ENCODE measurements at regions of chr17 and their contacts with region 1.

Region 1: GRCh38 chr17:49191917-49192741 is 18.2 kb downstream of the GNGT2 start:
- DNase-seq: peak; percentile 84 to 98 (median 92)
- ATAC-seq: peak; percentile 52
- H3K4me3 ChIP-seq: peak overlapping the region; percentile 81
- H3K4me3 Mint-ChIP-seq: peak overlapping the region; percentile 93
- H3K27ac ChIP-seq: peak overlapping the region; percentile 92 to 97
- H3K27ac Mint-ChIP-seq: peak overlapping the region; percentile 98
- H3K4me1 ChIP-seq: peaks cover 25% of the 10 kb centered on the region
- H3K4me1 Mint-ChIP-seq: peaks cover 33% of the 10 kb centered on the region
- H3K27me3 ChIP-seq: no peaks in the 10 kb centered on the region
- H3K27me3 Mint-ChIP-seq: peaks cover 10% of the 10 kb centered on the region
- CTCF ChIP-seq: peak; percentile 56

Region 2: GRCh38 chr17:48892940-48893645 is 299.0 kb before region 1 on chr17:
- CTCF ChIA-PET with region 1: no interaction called
- POLR2A ChIA-PET with region 1: interaction called, 4 read pairs
- intact Hi-C with region 1: loop called in 1 of 2 experiments (anchors 5 kb)
- DNase-seq: peak in 2 of 14 experiments; percentile 43 to 49
- ATAC-seq: no peak
- H3K4me3 ChIP-seq: peak overlapping the region; percentile 74
- H3K4me3 Mint-ChIP-seq: peak overlapping the region; percentile 90
- H3K27ac ChIP-seq: peak overlapping the region; percentile 80 to 86
- H3K27ac Mint-ChIP-seq: peak overlapping the region; percentile 91
- H3K4me1 ChIP-seq: peaks cover 25% of the 10 kb centered on the region
- H3K4me1 Mint-ChIP-seq: peaks cover 22% of the 10 kb centered on the region
- H3K27me3 ChIP-seq: no peaks in the 10 kb centered on the region
- H3K27me3 Mint-ChIP-seq: no peaks in the 10 kb centered on the region
- CTCF ChIP-seq: no peak

Region 3: GRCh38 chr17:49180303-49180702 is 11.8 kb before region 1 on chr17:
- CTCF ChIA-PET with region 1: interaction called, 46 read pairs
- POLR2A ChIA-PET with region 1: interaction called, 26 read pairs
- intact Hi-C with region 1: no loop called
- DNase-seq: peak; percentile 40 to 83 (median 62)
- ATAC-seq: peak; percentile 44
- H3K4me3 ChIP-seq: no peak overlapping the region
- H3K4me3 Mint-ChIP-seq: no peak overlapping the region
- H3K27ac ChIP-seq: no peak overlapping the region
- H3K27ac Mint-ChIP-seq: no peak overlapping the region
- H3K4me1 ChIP-seq: peaks cover 5% of the 10 kb centered on the region
- H3K4me1 Mint-ChIP-seq: peaks cover 5% of the 10 kb centered on the region
- H3K27me3 ChIP-seq: no peaks in the 10 kb centered on the region
- H3K27me3 Mint-ChIP-seq: peaks cover 1% of the 10 kb centered on the region
- CTCF ChIP-seq: peak; percentile 89

Region 4: DNA sequence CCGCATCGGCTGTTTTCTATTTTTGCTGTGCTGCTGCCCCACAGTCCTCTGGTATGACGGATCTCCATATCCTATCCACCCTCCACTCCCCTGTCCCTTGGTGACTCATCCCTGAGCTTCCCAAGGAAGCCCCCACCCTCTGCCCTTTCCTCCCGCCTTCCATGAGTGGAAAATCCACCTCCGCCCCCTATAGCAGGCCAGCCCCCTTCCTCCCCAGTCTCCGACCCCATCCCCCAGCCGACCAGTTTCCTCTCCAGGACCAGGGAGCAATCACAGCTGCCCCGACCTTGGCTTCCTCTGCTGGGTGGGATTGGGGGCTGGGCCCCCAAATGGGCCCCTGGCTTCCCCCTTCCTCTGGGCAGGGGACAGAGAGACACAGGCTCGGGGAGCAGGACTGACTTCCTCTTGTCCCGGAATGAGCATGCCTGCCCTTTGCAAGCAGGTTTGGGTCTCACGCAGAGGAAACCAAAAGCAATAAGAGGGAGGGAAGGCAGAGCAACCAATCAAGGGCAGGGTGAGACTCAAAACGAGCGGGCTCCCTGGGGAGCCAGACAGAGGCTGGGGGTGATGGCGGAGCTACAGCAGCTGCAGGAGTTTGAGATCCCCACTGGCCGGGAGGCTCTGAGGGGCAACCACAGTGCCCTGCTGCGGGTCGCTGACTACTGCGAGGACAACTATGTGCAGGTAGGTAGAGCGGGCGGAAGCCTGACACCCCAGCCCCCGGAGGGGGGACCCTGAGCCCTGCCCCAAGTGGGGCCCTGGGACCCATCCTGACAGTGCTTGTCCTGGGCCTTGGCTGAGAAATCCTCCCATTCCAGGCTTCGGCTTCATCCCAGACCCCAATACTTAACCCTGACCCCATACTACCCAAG is 18.3 kb after region 1 on chr17 and contains the starts of genes ABI3 and GNGT2:
- CTCF ChIA-PET with region 1: interaction called, 14 read pairs
- POLR2A ChIA-PET with region 1: interaction called, 53 read pairs
- intact Hi-C with region 1: loop called in 1 of 2 experiments (anchors 2 kb)
- DNase-seq: peak; percentile 39 to 84 (median 53)
- ATAC-seq: peak; percentile 88
- H3K4me3 ChIP-seq: peak within 1 kb of the TSS; percentile 67
- H3K4me3 Mint-ChIP-seq: peak within 1 kb of the TSS; percentile 95
- H3K27ac ChIP-seq: peak within 1 kb of the TSS; percentile 53 to 70
- H3K27ac Mint-ChIP-seq: peak within 1 kb of the TSS; percentile 73
- H3K4me1 ChIP-seq: peaks cover 80% of the 10 kb centered on the region
- H3K4me1 Mint-ChIP-seq: peaks cover 70% of the 10 kb centered on the region
- H3K27me3 ChIP-seq: no peaks in the 10 kb centered on the region
- H3K27me3 Mint-ChIP-seq: no peaks in the 10 kb centered on the region
- CTCF ChIP-seq: no peak
- total RNA-seq, gene ABI3: 5.6 to 5.8 TPM
- total RNA-seq, gene GNGT2: 2.3 to 2.4 TPM

Region 5: GRCh38 chr17:49223517-49224197 is 31.5 kb after region 1 on chr17:
- CTCF ChIA-PET with region 1: interaction called, 14 read pairs
- POLR2A ChIA-PET with region 1: interaction called, 64 read pairs
- intact Hi-C with region 1: loop called (anchors 1 kb)
- DNase-seq: peak; percentile 46 to 78 (median 59)
- ATAC-seq: peak; percentile 23
- H3K4me3 ChIP-seq: peak overlapping the region; percentile 49
- H3K4me3 Mint-ChIP-seq: peak overlapping the region; percentile 74
- H3K27ac ChIP-seq: no peak overlapping the region
- H3K27ac Mint-ChIP-seq: peak overlapping the region; percentile 43
- H3K4me1 ChIP-seq: peaks cover 52% of the 10 kb centered on the region
- H3K4me1 Mint-ChIP-seq: peaks cover 40% of the 10 kb centered on the region
- H3K27me3 ChIP-seq: peaks cover 0 to 4% of the 10 kb centered on the region in 2 experiments
- H3K27me3 Mint-ChIP-seq: peaks cover 7% of the 10 kb centered on the region
- CTCF ChIP-seq: peak; percentile 85

Region 6: GRCh38 chr17:49239963-49240362 is 47.8 kb after region 1 on chr17:
- CTCF ChIA-PET with region 1: no interaction called
- POLR2A ChIA-PET with region 1: no interaction called
- intact Hi-C with region 1: no loop called
- DNase-seq: no peak
- ATAC-seq: no peak
- H3K4me3 ChIP-seq: no peak overlapping the region
- H3K4me3 Mint-ChIP-seq: no peak overlapping the region
- H3K27ac ChIP-seq: no peak overlapping the region
- H3K27ac Mint-ChIP-seq: no peak overlapping the region
- H3K4me1 ChIP-seq: no peaks in the 10 kb centered on the region
- H3K4me1 Mint-ChIP-seq: no peaks in the 10 kb centered on the region
- H3K27me3 ChIP-seq: no peaks in the 10 kb centered on the region
- H3K27me3 Mint-ChIP-seq: peaks cover 7% of the 10 kb centered on the region
- CTCF ChIP-seq: no peak

Region 7: GRCh38 chr17:49361902-49362722 is 170.0 kb after region 1 on chr17 and contains the start of gene ZNF652:
- CTCF ChIA-PET with region 1: no interaction called
- POLR2A ChIA-PET with region 1: interaction called, 5 read pairs
- intact Hi-C with region 1: loop called in 1 of 2 experiments (anchors 1 kb)
- DNase-seq: peak; percentile 94 to 98 (median 97)
- ATAC-seq: peak; percentile 59
- H3K4me3 ChIP-seq: peak within 1 kb of the TSS; percentile 86
- H3K4me3 Mint-ChIP-seq: peak within 1 kb of the TSS; percentile 96
- H3K27ac ChIP-seq: peak within 1 kb of the TSS; percentile 61 to 87
- H3K27ac Mint-ChIP-seq: peak within 1 kb of the TSS; percentile 97
- H3K4me1 ChIP-seq: peaks cover 38% of the 10 kb centered on the region
- H3K4me1 Mint-ChIP-seq: peaks cover 56% of the 10 kb centered on the region
- H3K27me3 ChIP-seq: no peaks in the 10 kb centered on the region
- H3K27me3 Mint-ChIP-seq: no peaks in the 10 kb centered on the region
- CTCF ChIP-seq: no peak
- total RNA-seq, gene ZNF652: 33.7 to 34.9 TPM